ENCODE measurements at regions of chr2 and their contacts with region 1.

Region 1: GRCh38 chr2:8681786-8682692 is at the start of gene ID2:
- DNase-seq: peak; percentile 97 to 99 (median 98)
- ATAC-seq: peak; percentile 73
- H3K4me3 ChIP-seq: peak within 1 kb of the TSS; percentile 77
- H3K4me3 Mint-ChIP-seq: peak within 1 kb of the TSS; percentile 99
- H3K27ac ChIP-seq: peak within 1 kb of the TSS; percentile 37 to 52
- H3K27ac Mint-ChIP-seq: peak within 1 kb of the TSS; percentile 89
- H3K4me1 ChIP-seq: peaks cover 46% of the 10 kb centered on the region
- H3K4me1 Mint-ChIP-seq: peaks cover 54% of the 10 kb centered on the region
- H3K27me3 ChIP-seq: peaks cover 12 to 23% of the 10 kb centered on the region in 2 experiments
- H3K27me3 Mint-ChIP-seq: peaks cover 20% of the 10 kb centered on the region
- CTCF ChIP-seq: no peak
- total RNA-seq, gene ID2: 238 to 242 TPM

Region 2: DNA sequence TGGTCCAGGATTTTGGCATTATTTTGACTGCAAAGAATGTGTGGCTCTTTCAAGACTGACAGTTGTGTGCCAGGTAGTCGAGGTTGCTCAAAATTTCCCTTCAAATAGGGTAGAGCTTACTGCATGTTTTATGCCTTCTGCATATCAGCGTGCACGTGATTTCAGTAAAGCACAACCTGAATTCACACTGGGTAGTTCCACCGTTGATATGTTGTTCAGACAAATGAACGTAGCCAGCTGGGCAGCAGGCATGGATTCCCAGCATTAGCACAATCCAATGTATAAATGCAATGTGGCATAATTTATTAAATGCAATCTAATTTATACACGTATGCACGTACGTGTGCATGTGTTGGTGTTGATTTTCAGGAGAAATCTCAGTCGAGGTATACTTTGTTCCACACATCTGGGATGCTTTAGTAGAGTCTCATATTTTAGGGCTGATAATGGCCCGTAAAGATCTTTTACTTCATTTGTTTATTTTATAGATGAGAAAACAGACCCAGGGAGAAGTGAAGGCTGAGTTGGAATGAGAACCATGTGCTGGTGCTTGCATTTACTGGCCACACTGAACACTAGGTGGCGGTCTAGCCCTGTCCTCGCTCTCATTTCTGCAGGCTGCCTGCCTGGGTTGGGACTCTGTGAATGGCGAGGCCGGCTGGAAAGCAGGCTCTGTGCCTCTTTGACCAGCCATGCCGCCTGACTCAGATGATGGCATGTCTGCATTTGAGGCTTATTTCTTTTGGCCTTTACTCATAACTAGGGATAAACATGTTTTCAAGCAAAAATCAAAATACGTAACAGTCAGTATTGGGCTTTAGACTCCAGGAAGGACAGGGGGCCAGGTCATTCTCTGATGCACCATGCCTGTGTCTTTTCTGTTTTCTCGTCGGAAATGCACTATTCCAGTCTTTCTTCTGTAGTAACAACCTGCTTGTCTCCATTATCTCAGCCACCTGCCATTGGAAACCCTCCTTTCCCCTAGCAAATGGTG is 1644.4 kb before region 1 on chr2:
- CTCF ChIA-PET with region 1: no interaction called
- POLR2A ChIA-PET with region 1: no interaction called
- intact Hi-C with region 1: loop called (anchors 2 to 5 kb)
- DNase-seq: peak; percentile 26 to 74 (median 52)
- ATAC-seq: peak; percentile 94
- H3K4me3 ChIP-seq: no peak overlapping the region
- H3K4me3 Mint-ChIP-seq: no peak overlapping the region
- H3K27ac ChIP-seq: no peak overlapping the region
- H3K27ac Mint-ChIP-seq: peak overlapping the region; percentile 52
- H3K4me1 ChIP-seq: peaks cover 5% of the 10 kb centered on the region
- H3K4me1 Mint-ChIP-seq: peaks cover 12% of the 10 kb centered on the region
- H3K27me3 ChIP-seq: no peaks in the 10 kb centered on the region
- H3K27me3 Mint-ChIP-seq: no peaks in the 10 kb centered on the region
- CTCF ChIP-seq: peak; percentile 75

Region 3: GRCh38 chr2:7203055-7203467 is 1479.0 kb before region 1 on chr2:
- CTCF ChIA-PET with region 1: no interaction called
- POLR2A ChIA-PET with region 1: no interaction called
- intact Hi-C with region 1: loop called (anchors 1 kb)
- DNase-seq: peak; percentile 29 to 77 (median 42)
- ATAC-seq: no peak
- H3K4me3 ChIP-seq: no peak overlapping the region
- H3K4me3 Mint-ChIP-seq: no peak overlapping the region
- H3K27ac ChIP-seq: no peak overlapping the region
- H3K27ac Mint-ChIP-seq: no peak overlapping the region
- H3K4me1 ChIP-seq: no peaks in the 10 kb centered on the region
- H3K4me1 Mint-ChIP-seq: no peaks in the 10 kb centered on the region
- H3K27me3 ChIP-seq: no peaks in the 10 kb centered on the region
- H3K27me3 Mint-ChIP-seq: no peaks in the 10 kb centered on the region
- CTCF ChIP-seq: peak; percentile 94

Region 4: DNA sequence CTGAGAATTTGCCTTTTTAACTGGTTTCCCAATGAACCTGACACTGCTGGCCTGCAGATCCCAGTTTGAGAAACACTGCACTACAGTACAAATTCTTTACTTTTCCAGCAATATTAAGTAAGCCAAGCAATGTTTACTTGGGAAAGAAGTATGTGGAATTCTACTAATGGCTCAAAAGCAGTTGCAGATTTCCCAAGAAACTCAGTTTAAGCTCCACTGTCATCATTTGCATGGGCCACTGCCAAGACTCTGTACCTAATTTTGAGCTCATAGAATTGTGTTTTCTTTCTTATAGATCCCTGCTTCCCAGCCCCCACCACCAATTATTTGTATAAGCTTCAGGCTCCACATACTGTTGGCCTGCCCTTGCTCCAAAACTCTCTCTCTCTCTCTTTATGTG is 1088.7 kb before region 1 on chr2:
- CTCF ChIA-PET with region 1: no interaction called
- POLR2A ChIA-PET with region 1: interaction called, 6 read pairs
- intact Hi-C with region 1: loop called in 1 of 2 experiments (anchors 10 kb)
- DNase-seq: no peak
- ATAC-seq: no peak
- H3K4me3 ChIP-seq: no peak overlapping the region
- H3K4me3 Mint-ChIP-seq: no peak overlapping the region
- H3K27ac ChIP-seq: no peak overlapping the region
- H3K27ac Mint-ChIP-seq: no peak overlapping the region
- H3K4me1 ChIP-seq: no peaks in the 10 kb centered on the region
- H3K4me1 Mint-ChIP-seq: peaks cover 16% of the 10 kb centered on the region
- H3K27me3 ChIP-seq: no peaks in the 10 kb centered on the region
- H3K27me3 Mint-ChIP-seq: no peaks in the 10 kb centered on the region
- CTCF ChIP-seq: no peak

Region 5: DNA sequence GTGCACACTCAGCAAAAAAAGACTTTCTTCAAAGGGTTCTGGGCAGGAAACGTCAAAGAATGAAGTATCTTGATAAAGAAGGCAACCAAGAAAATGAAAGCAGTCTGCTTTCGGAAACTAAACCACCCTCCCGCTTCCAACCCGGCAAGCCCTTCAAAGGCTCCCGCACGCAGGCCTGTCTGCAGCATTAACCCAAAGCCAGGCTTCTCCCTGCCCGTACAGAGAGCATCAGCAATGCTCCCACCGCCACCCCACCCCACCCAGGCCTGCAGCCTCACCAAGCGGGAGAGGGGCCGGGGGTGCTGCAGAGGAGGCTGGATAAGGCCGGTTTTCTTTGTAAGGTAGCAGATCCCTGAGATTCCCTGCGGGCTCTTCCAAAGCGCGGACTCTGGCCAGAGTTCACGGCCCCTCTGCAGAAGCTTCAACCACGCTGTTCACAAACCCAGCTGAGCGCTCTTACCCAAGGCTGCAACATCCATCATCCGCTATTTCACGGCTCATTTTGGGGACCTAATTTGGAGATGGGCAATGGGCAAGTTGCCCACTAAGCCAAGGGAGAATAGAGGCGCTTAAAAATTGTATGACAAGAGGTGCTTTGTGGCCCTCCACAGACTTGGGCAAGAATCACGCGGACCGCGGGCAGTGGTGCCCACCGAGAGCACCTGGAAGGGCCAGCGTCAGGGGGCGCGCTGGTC is 225.7 kb before region 1 on chr2:
- CTCF ChIA-PET with region 1: no interaction called
- POLR2A ChIA-PET with region 1: no interaction called
- intact Hi-C with region 1: loop called in 1 of 2 experiments (anchors 10 kb)
- DNase-seq: peak in 12 of 14 experiments; percentile 20 to 83 (median 38)
- ATAC-seq: peak; percentile 67
- H3K4me3 ChIP-seq: peak overlapping the region; percentile 49
- H3K4me3 Mint-ChIP-seq: peak overlapping the region; percentile 89
- H3K27ac ChIP-seq: peak overlapping the region; percentile 64 to 72
- H3K27ac Mint-ChIP-seq: peak overlapping the region; percentile 68
- H3K4me1 ChIP-seq: peaks cover 41% of the 10 kb centered on the region
- H3K4me1 Mint-ChIP-seq: peaks cover 25% of the 10 kb centered on the region
- H3K27me3 ChIP-seq: no peaks in the 10 kb centered on the region
- H3K27me3 Mint-ChIP-seq: no peaks in the 10 kb centered on the region
- CTCF ChIP-seq: no peak

Region 6: DNA sequence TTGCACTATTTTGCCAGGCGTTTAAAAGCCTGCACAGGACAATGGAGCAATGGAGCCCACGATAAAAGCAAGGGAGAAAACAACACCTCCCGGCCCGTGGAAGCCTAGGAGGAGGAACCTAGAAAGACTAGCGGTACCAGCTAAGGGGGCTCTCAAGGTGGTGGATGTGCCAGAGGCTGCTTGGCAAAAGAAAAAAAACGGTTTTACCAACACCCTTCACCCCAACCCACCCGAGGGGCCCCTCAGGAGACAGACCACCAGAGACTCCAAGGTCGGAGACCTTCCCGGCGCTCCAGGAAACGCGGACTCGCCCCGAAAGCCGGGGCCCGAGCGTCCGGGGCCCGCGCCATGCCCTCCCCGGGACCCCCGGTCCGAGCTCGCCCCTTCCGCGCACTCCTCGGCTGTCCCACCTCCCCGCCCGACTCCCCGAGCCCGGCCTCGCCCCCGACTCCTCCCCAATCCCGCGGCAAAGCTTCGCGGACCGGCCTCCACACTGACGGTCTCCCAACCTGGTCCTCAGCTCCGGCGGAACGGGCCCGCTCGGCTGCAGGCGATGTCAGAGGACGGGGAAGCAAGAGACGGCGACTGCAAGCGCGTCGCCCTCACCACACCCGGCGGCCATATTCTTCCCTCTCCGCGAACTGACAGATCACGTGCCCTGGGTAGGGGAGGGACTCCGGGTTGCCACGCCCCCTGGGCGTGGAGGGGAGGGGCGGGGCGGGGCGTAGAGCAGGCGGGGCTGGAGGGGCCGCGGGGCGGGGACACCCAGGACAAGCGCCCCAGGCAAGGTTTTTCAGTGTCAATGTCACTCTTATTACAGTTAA is 155.1 kb after region 1 on chr2 and contains the start of gene KIDINS220:
- CTCF ChIA-PET with region 1: interaction called, 3 read pairs
- POLR2A ChIA-PET with region 1: interaction called, 5 read pairs
- intact Hi-C with region 1: loop called in 1 of 2 experiments (anchors 5 kb)
- DNase-seq: peak; percentile 79 to 93 (median 84)
- ATAC-seq: peak; percentile 96
- H3K4me3 ChIP-seq: peak within 1 kb of the TSS; percentile 89
- H3K4me3 Mint-ChIP-seq: peak within 1 kb of the TSS; percentile 100
- H3K27ac ChIP-seq: peak within 1 kb of the TSS in 1 of 2 donors; percentile 48
- H3K27ac Mint-ChIP-seq: peak within 1 kb of the TSS; percentile 84
- H3K4me1 ChIP-seq: peaks cover 40% of the 10 kb centered on the region
- H3K4me1 Mint-ChIP-seq: peaks cover 49% of the 10 kb centered on the region
- H3K27me3 ChIP-seq: no peaks in the 10 kb centered on the region
- H3K27me3 Mint-ChIP-seq: no peaks in the 10 kb centered on the region
- CTCF ChIP-seq: no peak
- total RNA-seq, gene KIDINS220: 29.3 to 31.4 TPM

Measured in CD4-positive, alpha-beta T cell (primary cell).